ENCODE measurements at regions of chr4 and their contacts with region 1.

Region 1: GRCh38 chr4:17511950-17512795 is at the start of gene QDPR:
- DNase-seq: peak; percentile 77 to 93 (median 85)
- H3K4me3 ChIP-seq: peak within 1 kb of the TSS; percentile 55 to 94 (median 83)
- H3K27ac ChIP-seq: peak within 1 kb of the TSS; percentile 78 to 99 (median 95)
- H3K27me3 ChIP-seq: no peaks in the 10 kb centered on the region
- CTCF ChIP-seq: peak in 54 of 56 donors; percentile 29 to 81 (median 57)
- total RNA-seq, gene QDPR: 164 to 1,204 (median 436) TPM

Region 2: DNA sequence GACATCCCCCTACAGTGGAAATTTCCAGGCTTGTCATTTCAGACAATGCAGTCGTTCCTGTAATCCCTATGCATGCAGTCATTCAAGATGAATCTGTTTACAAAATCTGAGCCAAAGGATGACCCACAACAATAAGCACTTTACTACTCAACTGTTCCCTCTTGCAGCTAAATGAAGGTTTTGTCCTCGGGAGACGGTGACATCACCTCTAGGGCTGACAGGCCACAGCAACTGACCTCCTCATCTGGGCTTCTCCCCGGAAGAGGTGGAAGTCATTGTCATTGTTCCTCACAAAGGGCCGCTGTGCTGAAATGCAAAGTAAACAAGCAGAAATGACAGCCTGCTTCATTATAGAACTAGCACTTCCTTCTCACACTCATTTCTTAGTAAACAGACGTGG is 32.0 kb after region 1 on chr4:
- intact Hi-C with region 1: loop called (anchors 1 to 2 kb)
- DNase-seq: peak; percentile 23 to 94 (median 87)
- H3K4me3 ChIP-seq: peak overlapping the region in 2 of 59 donors; percentile 18 to 21
- H3K27ac ChIP-seq: peak overlapping the region; percentile 66 to 100 (median 95)
- H3K27me3 ChIP-seq: no peaks in the 10 kb centered on the region
- CTCF ChIP-seq: peak in 4 of 56 donors; percentile 6 to 23 (median 20)

Region 3: DNA sequence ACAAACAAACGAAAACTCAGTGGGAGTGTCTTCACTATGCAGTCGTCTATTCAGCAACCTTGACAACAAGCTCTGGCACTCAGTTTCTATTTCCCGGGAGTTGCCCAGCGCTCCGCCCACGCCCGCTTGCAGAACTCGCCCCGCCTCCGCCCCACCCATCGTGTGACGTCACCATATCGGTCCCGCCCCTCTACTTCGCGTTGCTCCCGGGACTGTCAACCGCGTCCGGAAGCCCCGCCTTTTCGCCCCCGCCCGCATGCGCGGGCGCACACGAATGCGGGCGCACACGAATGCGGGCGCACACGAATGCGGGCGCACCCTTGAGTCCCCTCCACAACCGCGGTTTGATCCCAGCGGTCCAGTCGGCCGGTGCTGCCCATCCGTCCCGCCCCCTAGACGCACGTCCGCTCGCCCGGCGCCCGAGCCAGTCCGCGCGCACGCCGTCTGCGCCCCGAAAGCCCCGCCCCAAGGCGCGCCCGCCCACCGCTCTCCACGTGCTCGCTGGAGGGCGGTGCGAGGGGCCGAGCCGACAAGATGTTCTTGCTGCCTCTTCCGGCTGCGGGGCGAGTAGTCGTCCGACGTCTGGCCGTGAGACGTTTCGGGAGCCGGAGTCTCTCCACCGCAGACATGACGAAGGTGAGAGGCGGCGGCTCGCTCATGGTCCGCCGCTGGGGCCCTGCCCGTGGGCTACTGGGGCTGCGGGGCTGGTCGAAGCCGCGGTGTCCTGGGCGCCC is 64.9 kb after region 1 on chr4 and contains the start of gene LAP3:
- intact Hi-C with region 1: loop called (anchors 1 to 2 kb)
- DNase-seq: peak; percentile 98 to 99 (median 99)
- H3K4me3 ChIP-seq: peak within 1 kb of the TSS; percentile 63 to 100 (median 91)
- H3K27ac ChIP-seq: peak within 1 kb of the TSS; percentile 17 to 98 (median 92)
- H3K27me3 ChIP-seq: no peaks in the 10 kb centered on the region
- CTCF ChIP-seq: peak in 20 of 56 donors; percentile 4 to 55 (median 20)
- total RNA-seq, gene LAP3: 29.7 to 116 (median 52.0) TPM